Breast epithelium (tissue), 4 donors: ENCODE measurements at regions of chr5 and their contacts with region 1.

Region 1: DNA sequence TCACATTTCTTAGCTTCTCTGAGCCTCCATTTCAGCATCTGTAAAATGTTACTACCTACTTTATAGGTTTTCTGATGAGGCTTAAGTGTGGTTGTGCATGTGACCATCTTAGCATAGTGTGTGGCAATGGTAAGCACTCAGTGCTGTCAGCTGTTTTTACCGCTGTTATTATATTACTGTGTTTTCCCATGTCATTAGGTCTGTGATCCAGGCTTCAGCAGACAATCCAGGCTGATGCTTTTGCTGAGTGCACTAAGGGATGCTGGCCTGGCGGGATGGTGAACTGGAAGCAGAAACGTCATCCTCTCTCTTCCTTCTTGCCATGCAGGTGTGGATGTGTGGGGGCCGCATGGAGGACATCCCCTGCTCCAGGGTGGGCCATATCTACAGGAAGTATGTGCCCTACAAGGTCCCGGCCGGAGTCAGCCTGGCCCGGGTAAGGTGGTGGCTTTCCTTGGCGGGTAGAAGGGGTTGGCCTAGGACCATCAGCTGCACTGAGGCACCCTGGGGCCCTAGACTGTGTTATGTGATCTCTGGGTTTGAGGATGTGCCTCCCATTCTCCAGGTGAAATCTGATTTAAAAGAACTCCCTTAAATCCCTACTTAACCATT is 41.9 kb upstream of the SAP30L start:
- DNase-seq: no peak
- H3K4me3 ChIP-seq: no peak overlapping the region
- H3K27ac ChIP-seq: no peak overlapping the region
- H3K4me1 ChIP-seq: no peaks in the 10 kb centered on the region
- H3K27me3 ChIP-seq: no peaks in the 10 kb centered on the region
- CTCF ChIP-seq: no peak
- POLR2A ChIP-seq: no peak

Region 2: DNA sequence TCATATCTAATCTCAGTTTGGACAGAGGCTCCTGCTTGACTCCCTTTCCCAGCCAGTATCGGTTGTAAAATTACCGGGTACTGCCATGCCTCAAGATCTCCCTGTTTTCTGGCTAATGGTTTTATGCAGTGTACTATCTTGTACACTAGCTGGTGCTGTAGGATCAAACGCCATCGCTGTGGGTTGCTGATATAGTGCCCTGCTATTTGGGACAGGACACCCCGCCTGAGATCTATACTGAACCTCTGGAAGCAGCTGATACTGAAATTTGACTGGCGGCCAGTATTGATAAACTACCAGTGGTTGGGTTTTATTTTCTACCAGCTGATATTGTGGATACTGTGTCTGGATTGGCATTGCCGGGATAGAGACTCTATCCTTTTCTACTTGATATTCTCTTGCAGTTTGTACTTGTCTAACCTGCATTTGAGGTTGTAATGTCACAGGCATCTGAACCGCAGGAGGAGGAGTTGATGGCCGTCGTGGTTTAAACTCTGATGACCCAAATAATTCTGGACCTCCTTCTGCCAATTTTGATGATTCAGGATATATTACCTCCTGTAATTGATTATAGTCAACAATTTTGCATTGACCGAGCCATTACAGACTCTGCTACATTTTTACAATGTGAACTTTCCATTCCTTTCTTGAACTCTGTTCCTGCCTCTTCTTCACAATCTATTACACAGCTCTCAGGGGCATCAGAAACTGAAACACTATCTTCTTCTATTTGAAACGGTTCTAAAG is 238.8 kb after region 1 on chr5:
- intact Hi-C with region 1: loop called (anchors 5 kb)
- DNase-seq: no peak
- H3K4me3 ChIP-seq: no peak overlapping the region
- H3K27ac ChIP-seq: no peak overlapping the region
- H3K4me1 ChIP-seq: no peaks in the 10 kb centered on the region
- H3K27me3 ChIP-seq: no peaks in the 10 kb centered on the region
- CTCF ChIP-seq: peak in 1 of 3 donors; percentile 35
- POLR2A ChIP-seq: no peak